ENCODE measurements at regions of chr2 and their contacts with region 1.

Region 1: DNA sequence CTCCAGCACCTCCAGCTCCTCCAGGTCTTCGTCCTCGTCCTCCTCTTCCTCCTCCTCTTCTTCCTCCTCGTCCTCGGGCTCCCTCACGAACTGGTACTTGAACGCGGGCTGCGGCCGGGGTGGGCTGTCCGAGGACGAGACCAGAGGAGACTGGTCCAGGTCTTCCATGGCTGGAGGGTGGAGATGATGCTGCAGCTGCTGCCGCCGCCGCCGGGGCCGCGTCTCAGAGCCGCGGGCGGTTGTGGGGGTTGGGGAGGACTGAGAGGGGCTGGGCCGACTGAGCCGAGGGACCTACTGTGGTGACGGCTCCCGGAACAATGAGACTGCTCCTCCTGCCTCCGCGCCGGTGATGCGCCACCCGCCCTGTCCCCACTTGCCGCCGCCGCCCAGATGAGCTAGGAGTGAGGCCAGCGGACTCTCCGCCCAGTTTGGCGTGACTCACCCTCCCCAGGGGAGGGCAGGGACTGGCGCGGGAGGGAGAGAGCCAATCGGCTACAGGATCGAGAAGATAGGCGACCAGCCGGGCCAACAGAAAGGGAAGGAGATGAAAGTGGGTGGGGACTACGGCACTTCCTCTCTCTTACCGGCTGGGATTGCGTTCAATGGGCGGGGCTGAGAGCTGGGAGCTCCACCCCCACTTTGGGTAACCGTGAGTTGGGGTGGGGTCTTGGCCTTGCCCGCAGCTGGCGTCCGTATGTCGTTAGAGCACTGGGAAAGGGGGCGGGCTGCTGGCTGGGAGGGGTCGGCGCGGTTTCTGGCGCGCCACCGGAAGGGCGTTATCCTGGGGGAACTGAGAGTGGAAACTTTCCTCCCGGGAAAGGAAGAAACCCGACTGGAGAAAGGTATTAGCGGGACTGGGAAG is at the start of gene RTN4:
- DNase-seq: peak; percentile 99 to 100
- H3K4me3 ChIP-seq: peak within 1 kb of the TSS; percentile 93
- H3K27ac ChIP-seq: peak within 1 kb of the TSS; percentile 96
- H3K4me1 ChIP-seq: peaks cover 36% of the 10 kb centered on the region
- H3K27me3 ChIP-seq: no peaks in the 10 kb centered on the region
- CTCF ChIP-seq: 0 out of 2 replicates have a peak, but pooled peaks have one; percentile 27
- total RNA-seq, gene RTN4: 342 and 343 TPM in 2 replicates

Region 2: GRCh38 chr2:54531558-54531957 is 518.8 kb before region 1 on chr2:
- CTCF ChIA-PET with region 1: no interaction called
- POLR2A ChIA-PET with region 1: no interaction called
- intact Hi-C with region 1: loop called (anchors 1 kb)
- DNase-seq: peak; percentile 56 to 88
- H3K4me3 ChIP-seq: no peak overlapping the region; the same call in 1 of the 2 replicates
- H3K27ac ChIP-seq: peak overlapping the region; percentile 87
- H3K4me1 ChIP-seq: peaks cover 41% of the 10 kb centered on the region
- H3K27me3 ChIP-seq: no peaks in the 10 kb centered on the region
- CTCF ChIP-seq: no peak

Region 3: DNA sequence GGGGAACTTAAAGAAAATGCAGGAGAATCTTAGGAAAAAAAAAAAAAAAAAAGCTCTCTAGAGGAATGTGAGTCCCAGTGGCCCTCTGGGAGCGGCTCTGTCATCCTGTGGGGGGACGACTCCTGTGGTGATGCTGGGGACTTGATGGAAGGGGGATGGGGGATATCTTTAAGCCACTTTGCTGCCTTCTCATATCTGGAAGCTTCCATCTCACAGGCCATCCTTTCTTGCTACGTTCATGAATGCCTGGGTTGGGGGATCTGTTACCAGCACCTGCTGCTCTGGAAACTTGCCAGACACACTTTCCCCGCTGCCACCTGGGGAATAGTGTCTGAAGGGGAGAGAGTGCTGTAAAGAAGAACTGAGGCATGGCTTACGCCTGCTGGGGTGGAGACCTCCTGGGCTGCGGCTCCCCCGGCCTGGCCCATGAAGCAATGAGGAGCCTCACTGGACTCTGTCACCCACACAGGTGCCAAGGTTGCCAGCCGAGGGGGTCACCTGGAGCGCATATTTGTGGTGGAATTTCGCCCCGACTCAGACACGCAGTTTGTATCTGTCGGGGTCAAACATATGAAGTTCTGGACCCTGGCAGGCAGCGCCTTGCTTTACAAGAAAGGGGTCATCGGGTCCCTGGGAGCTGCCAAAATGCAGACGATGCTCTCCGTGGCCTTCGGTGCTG is 92.9 kb before region 1 on chr2:
- CTCF ChIA-PET with region 1: no interaction called
- POLR2A ChIA-PET with region 1: interaction called, 10 read pairs
- intact Hi-C with region 1: no loop called
- DNase-seq: no peak
- H3K4me3 ChIP-seq: no peak overlapping the region
- H3K27ac ChIP-seq: no peak overlapping the region
- H3K4me1 ChIP-seq: peaks cover 36% of the 10 kb centered on the region
- H3K27me3 ChIP-seq: no peaks in the 10 kb centered on the region
- CTCF ChIP-seq: no peak

Region 4: GRCh38 chr2:55014962-55015939 is 35.1 kb before region 1 on chr2:
- CTCF ChIA-PET with region 1: no interaction called
- POLR2A ChIA-PET with region 1: interaction called, 4 read pairs
- intact Hi-C with region 1: loop called (anchors 1 kb)
- DNase-seq: peak; percentile 40 to 76
- H3K4me3 ChIP-seq: peak overlapping the region; percentile 9
- H3K27ac ChIP-seq: peak overlapping the region; percentile 35
- H3K4me1 ChIP-seq: peaks cover 89% of the 10 kb centered on the region
- H3K27me3 ChIP-seq: no peaks in the 10 kb centered on the region
- CTCF ChIP-seq: peak; percentile 83

Region 5: GRCh38 chr2:55097461-55098410 is 47.4 kb after region 1 on chr2:
- CTCF ChIA-PET with region 1: interaction called, 3 read pairs
- POLR2A ChIA-PET with region 1: interaction called, 20 read pairs
- intact Hi-C with region 1: loop called (anchors 1 kb)
- DNase-seq: peak; percentile 33 to 79
- H3K4me3 ChIP-seq: no peak overlapping the region; the same call in 1 of the 2 replicates
- H3K27ac ChIP-seq: peak overlapping the region; percentile 98
- H3K4me1 ChIP-seq: peaks cover 100% of the 10 kb centered on the region
- H3K27me3 ChIP-seq: no peaks in the 10 kb centered on the region
- CTCF ChIP-seq: no peak

Region 6: DNA sequence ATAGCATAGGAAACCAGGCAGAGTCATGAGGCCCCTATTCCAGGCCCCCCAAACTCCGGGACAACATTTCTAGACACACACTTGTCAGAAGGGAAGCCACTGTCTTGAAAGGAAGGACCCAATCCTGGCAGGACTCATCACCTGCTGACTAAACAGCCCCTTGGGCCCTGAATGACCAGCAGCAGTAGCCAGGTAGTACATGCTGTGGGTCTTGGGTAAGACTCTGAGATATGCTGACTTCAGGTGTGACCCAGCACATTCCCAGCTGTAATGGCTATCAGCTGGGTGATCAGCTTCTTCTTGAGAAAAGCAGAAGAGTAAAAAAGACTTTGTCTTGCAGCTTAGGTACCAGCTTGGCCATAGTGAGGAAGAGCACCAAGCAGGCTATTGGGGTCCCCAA is 146.1 kb after region 1 on chr2:
- CTCF ChIA-PET with region 1: no interaction called
- POLR2A ChIA-PET with region 1: no interaction called
- intact Hi-C with region 1: no loop called
- DNase-seq: no peak
- H3K4me3 ChIP-seq: no peak overlapping the region
- H3K27ac ChIP-seq: no peak overlapping the region
- H3K4me1 ChIP-seq: no peaks in the 10 kb centered on the region
- H3K27me3 ChIP-seq: no peaks in the 10 kb centered on the region
- CTCF ChIP-seq: no peak

Region 7: GRCh38 chr2:55232084-55232862 is 181.9 kb after region 1 on chr2 and contains the starts of genes CLHC1 and RPS27A:
- CTCF ChIA-PET with region 1: no interaction called
- POLR2A ChIA-PET with region 1: no interaction called
- intact Hi-C with region 1: loop called (anchors 1 kb)
- DNase-seq: peak; percentile 94 to 98
- H3K4me3 ChIP-seq: peak within 1 kb of the TSS; percentile 97
- H3K27ac ChIP-seq: peak within 1 kb of the TSS; percentile 83
- H3K4me1 ChIP-seq: peaks cover 29% of the 10 kb centered on the region
- H3K27me3 ChIP-seq: no peaks in the 10 kb centered on the region
- CTCF ChIP-seq: peak; percentile 7; the same call in 1 of the 2 replicates
- total RNA-seq, gene CLHC1: 20.5 and 27.1 TPM in 2 replicates
- total RNA-seq, gene RPS27A: 1,269 and 1,616 TPM in 2 replicates

Region 8: GRCh38 chr2:55338268-55338667 is 287.9 kb after region 1 on chr2:
- CTCF ChIA-PET with region 1: no interaction called
- POLR2A ChIA-PET with region 1: no interaction called
- intact Hi-C with region 1: no loop called
- DNase-seq: no peak
- H3K4me3 ChIP-seq: no peak overlapping the region
- H3K27ac ChIP-seq: no peak overlapping the region
- H3K4me1 ChIP-seq: no peaks in the 10 kb centered on the region
- H3K27me3 ChIP-seq: no peaks in the 10 kb centered on the region
- CTCF ChIP-seq: no peak

Region 9: DNA sequence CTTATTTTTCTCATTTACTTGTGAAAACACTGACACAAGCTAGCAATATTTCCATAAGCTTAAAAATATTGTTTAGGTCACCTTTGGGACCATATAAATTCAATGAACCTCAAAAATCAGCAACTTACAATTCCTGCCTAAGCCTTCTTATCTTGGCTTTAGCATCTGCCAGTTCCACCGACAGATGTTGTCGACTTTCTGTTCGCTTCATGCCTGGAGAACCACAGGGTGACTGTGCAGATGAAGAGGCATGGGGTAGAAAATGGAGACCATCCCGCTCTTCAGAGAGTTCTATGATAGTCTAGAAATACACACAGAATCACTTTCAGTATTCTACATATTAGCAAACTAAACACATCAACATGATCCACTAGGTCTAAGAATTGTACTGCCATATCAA is 305.1 kb after region 1 on chr2:
- CTCF ChIA-PET with region 1: no interaction called
- POLR2A ChIA-PET with region 1: no interaction called
- intact Hi-C with region 1: no loop called
- DNase-seq: no peak
- H3K4me3 ChIP-seq: no peak overlapping the region
- H3K27ac ChIP-seq: no peak overlapping the region
- H3K4me1 ChIP-seq: no peaks in the 10 kb centered on the region
- H3K27me3 ChIP-seq: no peaks in the 10 kb centered on the region
- CTCF ChIP-seq: no peak